ENCODE measurements at regions of chr1 and their contacts with region 1.

Region 1: DNA sequence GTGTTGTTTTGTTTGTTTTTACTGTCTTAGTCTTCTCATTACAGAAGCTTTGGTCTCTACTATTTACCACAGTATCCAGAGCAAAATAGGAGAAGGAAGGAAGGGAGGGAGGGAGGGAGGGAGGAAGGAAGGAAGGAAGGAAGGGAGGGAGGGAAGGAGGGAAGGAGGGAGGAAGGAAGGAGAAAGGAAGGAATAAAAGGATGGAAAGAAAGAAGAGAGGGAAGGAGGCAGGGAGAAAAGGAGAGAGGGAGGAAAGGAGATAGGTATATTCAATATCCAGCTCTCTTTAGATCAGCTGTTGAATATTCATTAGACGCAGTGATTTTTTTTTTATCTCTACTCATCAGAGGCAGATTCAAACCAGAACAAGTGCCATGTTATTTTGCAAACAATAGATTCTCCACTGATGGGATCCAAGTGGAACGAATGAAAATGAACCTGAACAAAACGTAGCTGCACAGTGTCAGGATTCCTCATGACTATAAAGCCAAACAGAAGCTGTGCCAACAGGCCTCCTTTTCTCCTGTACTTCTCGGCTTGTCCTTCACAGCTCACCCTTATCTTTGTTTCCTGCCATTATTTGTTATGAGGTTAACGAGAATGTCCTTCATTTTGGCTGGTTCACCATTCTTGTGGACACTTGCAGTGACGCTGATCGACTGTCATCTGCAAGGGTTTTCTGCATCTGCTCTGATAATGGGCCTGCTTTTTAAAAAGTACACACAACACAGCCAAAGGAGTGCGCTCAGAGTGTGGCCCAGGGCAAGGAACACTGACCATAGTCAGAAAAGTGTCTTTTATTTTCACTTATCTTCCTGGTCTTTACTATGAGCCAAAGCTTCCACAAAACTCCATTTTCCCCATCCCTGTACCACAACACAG is 7.8 kb upstream of the NTPCR start:
- DNase-seq: no peak
- ATAC-seq: no peak
- H3K4me3 ChIP-seq: no peak overlapping the region
- H3K4me3 Mint-ChIP-seq: no peak overlapping the region
- H3K27ac ChIP-seq: no peak overlapping the region
- H3K27ac Mint-ChIP-seq: no peak overlapping the region
- H3K4me1 ChIP-seq: peaks cover 0 to 15% of the 10 kb centered on the region in 2 experiments
- H3K4me1 Mint-ChIP-seq: peaks cover 6 to 22% (median 12%) of the 10 kb centered on the region in 3 donors
- H3K27me3 ChIP-seq: no peaks in the 10 kb centered on the region
- H3K27me3 Mint-ChIP-seq: peaks cover 0 to 5% of the 10 kb centered on the region in 2 donors

Region 2: GRCh38 chr1:231512147-231512698 is 1430.4 kb before region 1 on chr1:
- CTCF ChIA-PET with region 1: no interaction called
- POLR2A ChIA-PET with region 1: no interaction called
- DNase-seq: no peak
- ATAC-seq: no peak
- H3K4me3 ChIP-seq: no peak overlapping the region
- H3K4me3 Mint-ChIP-seq: no peak overlapping the region
- H3K27ac ChIP-seq: no peak overlapping the region
- H3K27ac Mint-ChIP-seq: no peak overlapping the region
- H3K4me1 ChIP-seq: no peaks in the 10 kb centered on the region
- H3K4me1 Mint-ChIP-seq: no peaks in the 10 kb centered on the region
- H3K27me3 ChIP-seq: no peaks in the 10 kb centered on the region
- H3K27me3 Mint-ChIP-seq: peaks cover 10 to 17% of the 10 kb centered on the region in 2 donors

Region 3: GRCh38 chr1:232508130-232508701 is 434.4 kb before region 1 on chr1:
- CTCF ChIA-PET with region 1: interaction called in 1 of 2 experiments, 15 read pairs
- POLR2A ChIA-PET with region 1: no interaction called
- DNase-seq: no peak
- ATAC-seq: no peak
- H3K4me3 ChIP-seq: no peak overlapping the region
- H3K4me3 Mint-ChIP-seq: no peak overlapping the region
- H3K27ac ChIP-seq: no peak overlapping the region
- H3K27ac Mint-ChIP-seq: no peak overlapping the region
- H3K4me1 ChIP-seq: no peaks in the 10 kb centered on the region
- H3K4me1 Mint-ChIP-seq: no peaks in the 10 kb centered on the region
- H3K27me3 ChIP-seq: no peaks in the 10 kb centered on the region
- H3K27me3 Mint-ChIP-seq: peaks cover 3 to 5% of the 10 kb centered on the region in 2 donors